ENCODE measurements at regions of chr5 and their contacts with region 1.

Region 1: DNA sequence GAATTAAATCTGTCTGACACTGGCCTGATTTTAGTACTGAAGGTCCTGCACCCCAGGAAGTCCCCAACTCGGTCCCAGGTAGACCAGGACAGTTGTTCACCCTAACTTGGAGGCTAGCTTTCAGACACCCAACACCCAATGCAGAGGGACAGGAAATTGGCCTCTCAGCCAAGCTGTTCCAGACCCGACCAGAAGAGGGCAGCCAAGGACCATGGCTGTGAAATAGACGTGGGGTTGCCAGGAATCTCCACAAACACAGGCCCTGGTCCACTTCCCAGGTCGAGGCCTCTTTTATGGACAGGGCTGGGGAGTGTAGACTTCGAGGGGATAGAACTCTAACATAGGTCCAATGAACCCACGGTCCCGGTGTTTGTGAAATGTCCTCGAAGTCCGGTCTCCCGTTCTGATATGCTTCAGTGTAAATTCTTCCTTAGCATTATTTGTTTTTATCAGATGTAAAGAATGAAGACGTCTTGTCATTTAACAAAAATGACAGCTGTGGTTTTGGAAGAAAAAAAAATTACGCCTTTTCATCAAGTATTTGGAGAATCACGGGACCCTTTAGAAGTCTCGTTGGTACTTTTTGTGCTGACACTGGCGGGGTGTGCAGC is 260.3 kb upstream of the ADAMTS16 start:
- DNase-seq: peak; percentile 73
- ATAC-seq: peak; percentile 75

Region 2: DNA sequence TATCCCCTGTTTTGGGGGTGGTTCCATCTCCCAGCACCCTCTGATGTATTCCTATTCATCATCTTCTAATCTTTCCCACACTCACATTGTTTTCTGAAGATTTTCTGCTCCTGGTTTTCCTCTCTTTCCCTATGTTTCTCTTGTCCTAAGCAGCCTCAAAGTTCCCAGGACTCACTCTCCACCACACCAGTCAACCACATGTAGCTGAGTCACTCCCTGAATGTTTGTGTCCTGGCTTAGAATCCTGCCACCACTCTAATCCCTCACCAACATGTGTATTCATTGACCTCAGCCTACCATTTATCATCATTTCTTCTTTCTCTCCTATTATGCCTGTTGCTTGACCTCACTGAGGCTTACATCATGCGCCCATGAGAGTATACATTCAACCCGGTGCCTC is 22.0 kb before region 1 on chr5:
- intact Hi-C with region 1: no loop called
- DNase-seq: no peak
- ATAC-seq: no peak

Region 3: GRCh38 chr5:4941957-4942830 is 62.4 kb after region 1 on chr5:
- intact Hi-C with region 1: loop called (anchors 5 kb)
- DNase-seq: no peak
- ATAC-seq: peak; percentile 56

Region 4: DNA sequence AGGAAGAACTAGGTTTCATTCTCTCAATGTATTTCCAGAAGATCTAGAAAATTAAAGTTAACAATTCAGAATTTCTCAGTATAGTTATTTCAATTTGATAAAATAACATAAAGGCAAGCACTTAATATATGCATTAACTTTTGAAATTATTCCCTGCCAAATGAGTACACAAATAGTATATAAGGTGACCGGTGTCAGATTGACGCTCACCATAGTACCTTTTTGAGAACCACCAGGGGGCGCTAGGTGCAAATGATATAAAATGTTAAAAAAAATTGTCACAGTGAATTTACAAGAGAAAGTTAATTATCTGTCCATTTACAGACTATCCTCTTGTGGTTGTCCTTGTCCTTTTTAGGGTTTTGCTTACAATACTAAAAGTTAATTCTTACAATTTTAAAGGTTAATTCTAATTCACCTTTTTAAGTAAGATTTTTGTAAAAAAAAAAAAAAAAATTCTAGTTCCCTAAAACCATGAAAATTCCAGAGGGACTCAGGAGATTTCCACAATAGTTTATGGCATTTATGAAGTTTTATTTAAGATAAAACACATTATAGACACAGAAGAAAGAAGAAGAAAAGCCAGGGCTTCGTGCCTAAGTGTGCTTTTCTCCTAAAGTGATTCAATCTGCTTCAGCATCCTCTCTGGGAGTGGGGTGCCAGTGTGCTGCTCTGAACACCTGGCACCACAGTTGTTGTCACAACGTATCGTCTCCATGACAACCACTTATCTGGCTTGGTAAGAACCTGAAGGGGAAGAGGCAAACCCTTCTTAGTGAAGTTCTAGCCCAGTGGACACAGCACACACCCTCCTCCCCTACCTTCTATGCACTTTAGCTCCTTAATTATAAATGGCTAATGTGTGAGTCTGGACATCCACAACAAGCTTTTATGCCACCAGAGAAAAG is 262.1 kb after region 1 on chr5:
- intact Hi-C with region 1: loop called (anchors 10 kb)
- DNase-seq: no peak
- ATAC-seq: no peak

Region 5: DNA sequence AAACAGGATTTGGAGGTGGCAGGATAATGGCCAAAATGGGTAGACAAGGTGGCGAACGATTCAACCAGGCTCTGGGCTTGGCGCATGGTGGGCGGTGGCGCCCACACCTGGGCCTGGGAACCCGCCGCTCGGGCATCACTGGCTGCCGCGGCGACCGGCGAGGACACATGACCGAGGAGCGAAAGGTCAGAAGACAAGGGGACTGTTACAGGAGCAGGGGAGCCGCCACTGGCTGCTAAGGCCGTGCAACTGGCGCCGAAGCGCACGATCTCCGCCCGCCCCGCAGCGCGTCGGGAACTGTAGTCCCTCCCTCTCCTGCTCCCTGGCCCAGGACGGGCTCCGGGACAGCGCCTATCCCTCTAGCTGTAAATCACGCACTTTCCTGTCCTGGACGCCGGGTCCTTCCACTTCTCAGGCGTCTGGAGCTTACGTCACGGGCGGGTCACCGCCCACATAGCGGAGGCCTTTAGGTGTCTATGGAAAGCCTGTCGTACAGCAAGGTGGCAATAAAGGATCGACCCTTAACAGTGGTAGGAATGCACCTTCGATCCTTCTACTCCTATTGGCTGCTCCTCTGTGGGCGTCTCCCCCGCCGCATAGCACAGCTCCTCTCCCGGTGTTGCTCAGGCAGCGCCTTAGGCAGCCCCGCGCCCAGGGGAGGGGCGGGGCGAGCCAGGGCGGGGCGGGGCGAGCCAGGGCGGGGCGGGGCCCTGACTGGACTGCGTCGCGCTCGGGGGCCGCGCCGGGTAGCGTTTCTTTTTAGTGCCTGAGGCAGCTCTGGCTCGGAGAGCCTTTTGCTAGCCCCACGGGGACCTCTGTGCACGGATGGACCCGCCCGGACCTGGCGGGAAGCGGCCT is 542.4 kb after region 1 on chr5 and contains the start of gene ICE1:
- intact Hi-C with region 1: loop called (anchors 2 kb)
- DNase-seq: peak; percentile 99
- ATAC-seq: peak; percentile 99
- total RNA-seq, gene ICE1: 18.3 TPM

Measured in Right ventricle myocardium inferior (tissue), 1 donor.